Mammary epithelial cell (primary cell): ENCODE measurements at regions of chr12 and their contacts with region 1.

Region 1: GRCh38 chr12:48969833-48970701 is 1.5 kb downstream of the WNT10B start:
- DNase-seq: no peak
- H3K4me3 ChIP-seq: peak overlapping the region in 1 of 3 experiments; percentile 7
- H3K27ac ChIP-seq: no peak overlapping the region
- H3K4me1 ChIP-seq: peaks cover 31% of the 10 kb centered on the region
- H3K27me3 ChIP-seq: no peaks in the 10 kb centered on the region
- CTCF ChIP-seq: peak in 1 of 2 donors; percentile 3

Region 2: GRCh38 chr12:48924617-48925303 is 45.3 kb before region 1 on chr12:
- CTCF ChIA-PET with region 1: no interaction called
- dilution Hi-C with region 1: loop called (anchors 5 kb)
- in situ Hi-C with region 1: no loop called
- intact Hi-C with region 1: no loop called
- DNase-seq: peak; percentile 11
- H3K4me3 ChIP-seq: peak overlapping the region; percentile 64 to 87 (median 73)
- H3K27ac ChIP-seq: peak overlapping the region; percentile 1
- H3K4me1 ChIP-seq: peaks cover 7% of the 10 kb centered on the region
- H3K27me3 ChIP-seq: no peaks in the 10 kb centered on the region
- CTCF ChIP-seq: peak; percentile 60

Region 3: DNA sequence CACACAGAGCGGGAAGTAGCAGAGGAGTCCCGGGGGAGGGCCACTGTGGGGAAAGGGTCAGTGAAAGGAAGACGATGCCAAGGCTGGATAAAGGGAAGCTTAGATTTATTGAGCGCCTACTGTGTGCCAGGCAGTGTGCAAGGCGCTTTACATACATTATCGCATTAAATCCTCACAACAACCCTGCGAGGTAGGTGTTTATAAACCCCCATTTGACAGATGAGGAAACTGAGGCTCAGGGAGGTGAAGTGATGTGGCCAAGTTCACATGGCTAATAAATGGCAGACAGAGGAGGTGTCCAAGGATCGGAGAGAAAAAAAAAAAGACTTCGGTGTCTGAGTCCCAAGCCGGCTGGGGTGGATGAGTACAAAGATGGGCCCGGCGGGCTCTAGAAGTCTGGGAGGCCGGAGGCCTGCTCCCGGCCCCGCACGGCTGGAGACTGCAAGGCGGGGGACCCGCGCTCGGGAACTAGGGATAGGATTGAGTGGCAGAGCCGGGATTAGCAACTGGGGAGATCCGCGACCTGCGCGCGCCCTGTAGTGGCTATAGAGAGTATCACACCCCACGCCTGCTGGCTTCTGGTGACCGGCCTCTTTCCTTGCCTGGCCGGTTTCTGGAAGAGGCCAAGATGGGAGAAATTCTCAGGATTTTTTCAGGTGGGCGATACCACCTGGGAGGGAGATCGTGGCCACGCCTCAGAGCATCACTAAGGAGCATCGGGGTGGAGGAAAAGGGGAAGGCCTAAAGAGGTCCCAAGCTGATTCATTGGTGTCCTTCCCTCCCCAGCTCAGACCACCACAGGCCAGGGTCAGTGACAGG is 25.2 kb after region 1 on chr12:
- CTCF ChIA-PET with region 1: no interaction called
- dilution Hi-C with region 1: no loop called
- in situ Hi-C with region 1: no loop called
- intact Hi-C with region 1: loop called (anchors 1 kb)
- DNase-seq: peak; percentile 63
- H3K4me3 ChIP-seq: peak overlapping the region in 2 of 3 experiments; percentile 21 to 26
- H3K27ac ChIP-seq: no peak overlapping the region
- H3K4me1 ChIP-seq: peaks cover 17% of the 10 kb centered on the region
- H3K27me3 ChIP-seq: no peaks in the 10 kb centered on the region
- CTCF ChIP-seq: peak; percentile 72 to 85

Region 4: GRCh38 chr12:49008943-49009342 is 38.9 kb after region 1 on chr12:
- CTCF ChIA-PET with region 1: no interaction called
- dilution Hi-C with region 1: loop called (anchors 5 kb)
- in situ Hi-C with region 1: no loop called
- intact Hi-C with region 1: no loop called
- DNase-seq: no peak
- H3K4me3 ChIP-seq: no peak overlapping the region
- H3K27ac ChIP-seq: no peak overlapping the region
- H3K4me1 ChIP-seq: no peaks in the 10 kb centered on the region
- H3K27me3 ChIP-seq: no peaks in the 10 kb centered on the region
- CTCF ChIP-seq: no peak

Region 5: GRCh38 chr12:49098035-49098451 is 128.0 kb after region 1 on chr12:
- CTCF ChIA-PET with region 1: no interaction called
- dilution Hi-C with region 1: no loop called
- in situ Hi-C with region 1: no loop called
- intact Hi-C with region 1: no loop called
- DNase-seq: no peak
- H3K4me3 ChIP-seq: no peak overlapping the region
- H3K27ac ChIP-seq: no peak overlapping the region
- H3K4me1 ChIP-seq: peaks cover 6% of the 10 kb centered on the region
- H3K27me3 ChIP-seq: peaks cover 19% of the 10 kb centered on the region
- CTCF ChIP-seq: peak; percentile 81

Region 6: DNA sequence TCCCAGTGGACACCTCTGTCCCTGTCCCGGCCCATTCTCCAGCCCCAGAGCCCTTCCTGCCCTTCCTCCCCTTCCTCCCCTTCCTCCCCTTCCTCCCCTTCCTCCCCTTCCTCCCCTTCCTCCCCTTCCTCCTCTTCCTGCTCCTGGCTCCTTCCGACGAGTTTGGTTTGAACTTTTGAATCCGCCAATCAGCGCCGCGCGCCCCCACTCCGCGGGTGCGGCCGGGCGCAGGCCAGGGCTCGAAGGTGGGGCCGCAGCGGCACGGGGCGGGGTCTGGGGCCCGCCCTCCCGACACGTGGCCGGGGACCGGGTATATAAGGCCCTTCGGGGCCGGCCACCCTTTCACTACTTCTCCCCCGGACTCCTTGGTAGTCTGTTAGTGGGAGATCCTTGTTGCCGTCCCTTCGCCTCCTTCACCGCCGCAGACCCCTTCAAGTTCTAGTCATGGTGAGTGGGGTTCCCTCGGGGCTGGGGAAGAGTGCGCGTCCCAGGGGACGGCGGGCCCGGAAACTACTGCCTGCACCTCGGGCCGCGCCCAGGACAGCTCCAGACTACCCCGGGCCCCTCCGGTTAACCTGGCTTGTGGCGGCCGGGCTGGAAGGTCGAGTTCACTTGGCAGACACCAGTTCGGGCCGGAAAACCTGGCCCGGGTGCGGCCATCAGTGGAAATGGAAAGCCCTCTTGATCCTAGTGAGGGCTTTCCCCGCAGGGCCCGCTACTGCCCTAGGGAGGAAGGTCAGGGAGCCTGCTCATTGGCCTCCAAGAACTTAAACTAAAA is 294.9 kb after region 1 on chr12 and contains the start of gene TUBA1C:
- CTCF ChIA-PET with region 1: no interaction called
- dilution Hi-C with region 1: no loop called
- in situ Hi-C with region 1: no loop called
- intact Hi-C with region 1: no loop called
- DNase-seq: peak; percentile 95
- H3K4me3 ChIP-seq: peak within 1 kb of the TSS; percentile 75 to 99 (median 89)
- H3K27ac ChIP-seq: peak within 1 kb of the TSS; percentile 94
- H3K4me1 ChIP-seq: peaks cover 46% of the 10 kb centered on the region
- H3K27me3 ChIP-seq: no peaks in the 10 kb centered on the region
- CTCF ChIP-seq: no peak
- total RNA-seq, gene TUBA1C: 455 to 532 TPM